Right lobe of liver (tissue), 6 donors: ENCODE measurements at regions of chr3 and their contacts with region 1.

Region 1: GRCh38 chr3:10758304-10759061 is 57.5 kb upstream of the SLC6A11 start:
- DNase-seq: peak; percentile 58 to 68 (median 65)
- ATAC-seq: peak; percentile 93 to 99 (median 96)
- H3K4me3 ChIP-seq: no peak overlapping the region
- H3K27ac ChIP-seq: no peak overlapping the region
- H3K4me1 ChIP-seq: no peaks in the 10 kb centered on the region
- H3K27me3 ChIP-seq: no peaks in the 10 kb centered on the region
- CTCF ChIP-seq: peak; percentile 66 to 79 (median 78)
- POLR2A ChIP-seq: no peak

Region 2: DNA sequence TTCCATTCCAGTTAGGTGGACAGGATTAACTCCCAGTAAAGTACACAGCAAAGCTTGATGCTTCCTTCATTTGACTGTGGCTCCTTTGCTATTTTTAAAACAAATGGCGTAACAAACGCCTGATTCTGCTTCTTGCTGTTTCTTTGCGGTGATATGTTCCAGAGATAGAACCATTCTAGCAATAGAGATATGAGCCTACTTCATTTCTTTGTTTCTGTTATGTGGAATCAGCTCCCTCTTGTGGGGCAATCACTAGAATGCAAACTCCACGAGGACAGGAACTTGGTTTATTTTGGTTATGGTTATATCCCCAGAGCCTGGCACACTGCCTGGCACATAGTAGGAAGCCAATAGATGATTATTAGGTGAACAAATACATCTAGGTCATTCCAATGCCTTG is 65.0 kb before region 1 on chr3:
- intact Hi-C with region 1: no loop called
- DNase-seq: no peak
- ATAC-seq: peak; percentile 55 to 66 (median 63)
- H3K4me3 ChIP-seq: no peak overlapping the region
- H3K27ac ChIP-seq: no peak overlapping the region
- H3K4me1 ChIP-seq: peaks cover 0 to 20% (median 8%) of the 10 kb centered on the region in 4 donors
- H3K27me3 ChIP-seq: no peaks in the 10 kb centered on the region
- CTCF ChIP-seq: peak; percentile 44 to 57 (median 55)
- POLR2A ChIP-seq: no peak

Region 3: GRCh38 chr3:10883478-10884234 is 125.2 kb after region 1 on chr3:
- intact Hi-C with region 1: loop called (anchors 5 to 10 kb)
- DNase-seq: peak in 1 of 3 donors; percentile 47
- ATAC-seq: peak in 2 of 4 donors; percentile 36 to 47
- H3K4me3 ChIP-seq: no peak overlapping the region
- H3K27ac ChIP-seq: no peak overlapping the region
- H3K4me1 ChIP-seq: no peaks in the 10 kb centered on the region
- H3K27me3 ChIP-seq: no peaks in the 10 kb centered on the region
- CTCF ChIP-seq: peak; percentile 48 to 60 (median 51)
- POLR2A ChIP-seq: no peak

Region 4: GRCh38 chr3:10945683-10946287 is 187.3 kb after region 1 on chr3:
- intact Hi-C with region 1: loop called in 1 of 2 experiments (anchors 10 kb)
- DNase-seq: peak; percentile 58 to 65 (median 62)
- ATAC-seq: peak; percentile 74 to 87 (median 82)
- H3K4me3 ChIP-seq: no peak overlapping the region
- H3K27ac ChIP-seq: no peak overlapping the region
- H3K4me1 ChIP-seq: no peaks in the 10 kb centered on the region
- H3K27me3 ChIP-seq: no peaks in the 10 kb centered on the region
- CTCF ChIP-seq: peak; percentile 68 to 84 (median 76)
- POLR2A ChIP-seq: no peak

Region 5: DNA sequence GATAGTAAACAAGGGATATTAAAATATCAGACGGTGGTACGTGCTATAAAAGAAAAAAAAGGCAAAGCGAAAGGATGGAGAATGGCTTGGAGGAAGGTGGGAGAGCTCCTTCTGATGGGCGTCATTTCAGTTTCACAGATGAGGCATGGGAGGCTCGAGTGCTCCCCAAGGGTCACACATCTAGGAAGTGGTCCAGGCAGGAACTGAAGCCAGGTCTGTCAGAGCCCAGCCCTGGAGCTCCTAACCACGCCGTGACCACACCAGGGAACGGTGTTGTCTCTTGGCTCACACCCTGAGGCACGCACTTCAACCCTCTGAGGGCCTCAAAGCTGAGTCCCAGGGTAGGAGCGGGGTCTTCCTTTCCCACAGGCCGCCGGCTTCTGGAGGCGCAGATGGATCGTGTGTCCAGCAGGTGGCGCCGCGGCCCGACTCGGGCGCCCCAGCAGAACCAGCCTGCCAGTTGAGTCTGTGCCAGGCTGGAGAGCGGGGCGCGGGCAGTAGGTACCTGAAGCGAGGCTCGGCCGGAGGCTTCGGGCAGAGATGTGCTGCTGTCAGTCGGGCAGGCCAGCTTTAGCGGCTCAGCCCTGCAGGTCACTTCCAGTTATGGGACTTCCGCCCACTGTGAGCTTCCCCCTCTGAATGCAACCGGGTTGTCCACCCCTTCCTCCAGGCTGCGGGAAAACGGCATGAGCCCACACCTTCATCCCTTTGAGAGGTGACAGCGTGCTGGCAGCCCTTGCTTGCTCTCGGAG is 302.2 kb after region 1 on chr3:
- intact Hi-C with region 1: loop called in 1 of 2 experiments (anchors 10 kb)
- DNase-seq: peak; percentile 60 to 68 (median 63)
- ATAC-seq: peak; percentile 62 to 78 (median 76)
- H3K4me3 ChIP-seq: no peak overlapping the region
- H3K27ac ChIP-seq: no peak overlapping the region
- H3K4me1 ChIP-seq: no peaks in the 10 kb centered on the region
- H3K27me3 ChIP-seq: no peaks in the 10 kb centered on the region
- CTCF ChIP-seq: peak; percentile 61 to 83 (median 80)
- POLR2A ChIP-seq: no peak